ENCODE measurements at regions of chr5 and their contacts with region 1.

Region 1: GRCh38 chr5:139619861-139620260 is 28.3 kb upstream of the CXXC5 start:
- DNase-seq: no peak
- ATAC-seq: no peak
- H3K4me3 ChIP-seq: no peak overlapping the region
- H3K27ac ChIP-seq: no peak overlapping the region
- H3K4me1 ChIP-seq: peaks cover 0 to 9% (median 0%) of the 10 kb centered on the region in 12 donors
- H3K27me3 ChIP-seq: no peaks in the 10 kb centered on the region
- CTCF ChIP-seq: no peak
- POLR2A ChIP-seq: no peak

Region 2: DNA sequence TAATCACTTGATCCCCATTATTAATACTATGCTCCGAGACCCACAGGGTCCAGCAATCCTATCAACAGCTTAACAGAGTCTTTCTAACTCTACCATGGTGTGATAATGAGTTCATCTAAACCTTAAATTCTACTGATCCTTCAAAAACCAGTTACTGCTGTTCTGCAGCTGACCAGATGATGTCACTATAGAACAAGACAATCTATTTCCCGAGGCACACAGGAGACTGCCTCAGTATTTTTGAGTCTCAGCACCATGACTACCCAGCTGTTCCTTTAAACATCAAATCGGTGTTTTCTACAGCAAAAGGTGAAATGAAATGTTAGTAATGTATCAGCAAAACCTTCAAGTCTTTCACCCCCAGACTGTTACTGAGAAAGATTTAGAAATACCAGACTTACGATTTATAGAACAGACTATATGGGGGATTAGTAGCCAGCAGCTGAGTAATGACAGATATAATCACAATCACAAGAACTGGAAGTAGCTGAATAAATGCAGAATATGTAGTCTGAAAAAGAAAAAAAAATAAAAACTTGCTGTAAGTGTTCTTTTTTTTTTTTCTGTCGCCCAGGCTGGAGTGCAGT is 197.5 kb before region 1 on chr5:
- intact Hi-C with region 1: loop called in 1 of 10 experiments (anchors 5 kb)
- DNase-seq: no peak
- ATAC-seq: peak in 2 of 4 donors; percentile 29 to 40
- H3K4me3 ChIP-seq: no peak overlapping the region
- H3K27ac ChIP-seq: no peak overlapping the region
- H3K4me1 ChIP-seq: peaks cover 6 to 39% (median 27%) of the 10 kb centered on the region in 12 donors
- H3K27me3 ChIP-seq: no peaks in the 10 kb centered on the region
- CTCF ChIP-seq: peak; percentile 67 to 94 (median 82)
- POLR2A ChIP-seq: no peak

Region 3: DNA sequence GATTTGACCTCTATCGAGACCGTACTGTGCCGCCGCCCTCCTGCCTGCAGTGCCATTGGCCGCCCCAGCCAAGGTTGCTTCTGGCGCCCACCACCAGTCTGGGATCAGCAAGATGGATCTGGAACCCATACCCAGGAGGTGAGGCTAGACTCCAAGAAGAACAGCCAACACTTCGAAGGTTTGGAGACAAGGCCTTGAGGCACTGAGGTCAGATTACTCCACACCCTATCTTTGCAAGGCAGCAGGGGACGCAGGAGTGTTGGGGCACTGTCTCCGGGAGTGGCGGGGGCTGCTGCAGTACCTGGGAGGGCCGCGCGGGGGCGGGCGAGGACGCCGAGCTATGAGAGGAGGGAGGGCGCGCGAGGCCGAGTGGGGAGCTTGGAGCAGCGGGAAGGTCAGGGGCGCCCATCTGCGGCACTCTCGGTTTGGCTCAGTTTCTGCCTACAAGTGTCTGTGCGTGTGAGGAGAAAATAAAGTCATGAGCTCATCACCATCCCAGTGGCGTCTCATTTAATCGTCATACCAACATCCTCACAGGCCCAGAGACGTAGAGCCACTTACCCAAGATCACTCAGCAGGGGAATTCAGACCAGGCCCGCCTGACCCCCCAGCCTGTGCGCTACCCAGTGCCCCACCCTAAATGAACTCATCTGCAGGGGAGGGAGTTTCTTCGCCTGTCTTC is 155.3 kb after region 1 on chr5:
- intact Hi-C with region 1: no loop called
- DNase-seq: peak; percentile 67 to 90 (median 74)
- ATAC-seq: peak; percentile 52 to 91 (median 86)
- H3K4me3 ChIP-seq: peak overlapping the region in 1 of 12 donors; percentile 6
- H3K27ac ChIP-seq: no peak overlapping the region
- H3K4me1 ChIP-seq: peaks cover 0 to 9% (median 4%) of the 10 kb centered on the region in 12 donors
- H3K27me3 ChIP-seq: no peaks in the 10 kb centered on the region
- CTCF ChIP-seq: peak; percentile 85 to 95 (median 92)
- POLR2A ChIP-seq: no peak

Region 4: GRCh38 chr5:139974661-139975060 is 354.8 kb after region 1 on chr5:
- intact Hi-C with region 1: loop called in 1 of 10 experiments (anchors 5 kb)
- DNase-seq: peak in 1 of 5 donors; percentile 6
- ATAC-seq: peak in 2 of 4 donors; percentile 12 to 29
- H3K4me3 ChIP-seq: no peak overlapping the region
- H3K27ac ChIP-seq: no peak overlapping the region
- H3K4me1 ChIP-seq: peaks cover 0 to 30% (median 7%) of the 10 kb centered on the region in 12 donors
- H3K27me3 ChIP-seq: no peaks in the 10 kb centered on the region
- CTCF ChIP-seq: no peak
- POLR2A ChIP-seq: no peak

Region 5: DNA sequence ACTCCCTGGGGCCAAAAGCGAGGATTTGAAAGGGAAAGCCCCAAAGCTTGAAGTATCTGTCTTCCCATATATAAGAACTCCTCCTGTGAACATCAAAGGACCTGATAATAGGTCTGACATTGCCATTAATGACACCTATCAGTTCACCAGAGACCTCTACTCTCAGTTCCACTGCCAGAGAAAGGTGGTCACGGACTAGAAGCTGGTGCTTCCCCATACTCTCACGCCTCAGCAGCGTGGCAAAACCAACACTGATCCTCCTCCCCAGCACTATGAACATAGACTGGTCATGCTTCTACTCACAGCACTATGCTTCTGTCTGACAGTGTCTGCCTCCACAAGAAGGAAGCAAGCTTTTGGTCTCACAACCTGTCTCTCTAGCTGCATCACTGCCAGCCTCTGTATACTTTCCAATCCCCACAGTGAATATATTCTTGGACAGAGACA is 385.3 kb after region 1 on chr5:
- intact Hi-C with region 1: no loop called
- DNase-seq: no peak
- ATAC-seq: peak in 1 of 4 donors; percentile 18
- H3K4me3 ChIP-seq: no peak overlapping the region
- H3K27ac ChIP-seq: peak overlapping the region in 5 of 12 donors; percentile 24 to 79 (median 34)
- H3K4me1 ChIP-seq: peaks cover 0 to 60% (median 14%) of the 10 kb centered on the region in 12 donors
- H3K27me3 ChIP-seq: no peaks in the 10 kb centered on the region
- CTCF ChIP-seq: no peak
- POLR2A ChIP-seq: no peak

Region 6: GRCh38 chr5:140020601-140021177 is 400.8 kb after region 1 on chr5:
- intact Hi-C with region 1: no loop called
- DNase-seq: no peak
- ATAC-seq: peak in 2 of 4 donors; percentile 39 to 41
- H3K4me3 ChIP-seq: no peak overlapping the region
- H3K27ac ChIP-seq: peak overlapping the region in 8 of 12 donors; percentile 14 to 90 (median 64)
- H3K4me1 ChIP-seq: peaks cover 0 to 57% (median 19%) of the 10 kb centered on the region in 12 donors
- H3K27me3 ChIP-seq: no peaks in the 10 kb centered on the region
- CTCF ChIP-seq: no peak
- POLR2A ChIP-seq: no peak